ENCODE measurements at regions of chr5 and their contacts with region 1.

Region 1: GRCh38 chr5:157384971-157385709 is 74.9 kb upstream of the NIPAL4 start:
- DNase-seq: peak; percentile 40 to 91
- H3K4me3 ChIP-seq: peak overlapping the region in 1 of 2 donors; percentile 15
- H3K27ac ChIP-seq: peak overlapping the region; percentile 94
- H3K4me1 ChIP-seq: peaks cover 16 to 39% of the 10 kb centered on the region in 2 donors
- H3K27me3 ChIP-seq: no peaks in the 10 kb centered on the region
- CTCF ChIP-seq: no peak

Region 2: DNA sequence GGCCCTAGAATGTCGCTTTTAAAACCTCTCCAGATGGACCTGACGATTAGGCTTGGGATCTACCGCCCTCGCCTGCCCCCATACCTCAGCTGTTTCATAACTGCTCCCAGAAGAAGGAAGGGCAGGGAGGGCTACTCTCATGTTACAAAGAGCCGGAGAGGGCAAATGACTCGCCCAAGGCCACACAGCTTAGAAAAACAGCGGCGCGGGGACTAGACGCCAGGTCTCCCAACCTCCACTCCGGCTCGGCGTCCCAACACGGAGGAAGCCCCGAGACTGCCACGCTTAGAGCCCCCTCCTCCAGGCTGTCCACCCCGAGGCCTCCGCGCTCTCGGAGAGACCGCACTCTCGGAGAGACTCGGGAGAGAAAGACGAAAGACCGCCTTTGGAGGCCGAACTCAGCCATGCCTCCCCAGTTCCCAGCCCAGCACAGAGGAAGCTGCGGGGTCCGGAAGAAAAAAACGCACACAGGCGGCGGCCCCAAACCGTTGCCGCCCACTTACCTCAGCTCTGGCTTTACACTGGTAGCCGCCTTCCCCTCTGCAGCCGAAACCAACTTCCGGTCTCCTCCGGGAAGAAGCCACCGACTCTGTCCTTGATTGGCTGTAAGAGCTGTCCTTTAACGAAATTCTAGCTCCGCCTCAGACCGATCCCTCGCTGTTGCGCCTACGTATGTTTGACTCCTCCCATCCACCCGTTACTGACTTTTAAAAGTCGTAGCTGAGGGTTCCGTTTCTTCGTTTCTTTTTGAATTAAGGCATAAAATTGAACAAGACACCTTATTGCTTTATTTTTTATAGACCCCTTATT is 242.6 kb before region 1 on chr5 and contains the start of gene MED7:
- intact Hi-C with region 1: loop called (anchors 5 kb)
- DNase-seq: peak; percentile 88 to 98
- H3K4me3 ChIP-seq: peak within 1 kb of the TSS; percentile 74 to 77
- H3K27ac ChIP-seq: peak within 1 kb of the TSS; percentile 89 to 90
- H3K4me1 ChIP-seq: peaks cover 5 to 9% of the 10 kb centered on the region in 2 donors
- H3K27me3 ChIP-seq: no peaks in the 10 kb centered on the region
- CTCF ChIP-seq: no peak
- total RNA-seq, gene MED7: 2.3 TPM

Region 3: GRCh38 chr5:157366741-157367674 is 18.1 kb before region 1 on chr5:
- intact Hi-C with region 1: loop called (anchors 2 kb)
- DNase-seq: peak in 1 of 2 donors; percentile 72
- H3K4me3 ChIP-seq: no peak overlapping the region
- H3K27ac ChIP-seq: peak overlapping the region; percentile 28 to 54
- H3K4me1 ChIP-seq: peaks cover 0 to 3% of the 10 kb centered on the region in 2 donors
- H3K27me3 ChIP-seq: no peaks in the 10 kb centered on the region
- CTCF ChIP-seq: peak; percentile 53 to 78 (median 68)

Region 4: GRCh38 chr5:157415838-157416237 is 30.7 kb after region 1 on chr5:
- intact Hi-C with region 1: no loop called
- DNase-seq: no peak
- H3K4me3 ChIP-seq: no peak overlapping the region
- H3K27ac ChIP-seq: no peak overlapping the region
- H3K4me1 ChIP-seq: no peaks in the 10 kb centered on the region
- H3K27me3 ChIP-seq: no peaks in the 10 kb centered on the region
- CTCF ChIP-seq: no peak

Region 5: GRCh38 chr5:157464519-157465171 is 79.5 kb after region 1 on chr5:
- intact Hi-C with region 1: loop called (anchors 5 kb)
- DNase-seq: peak in 1 of 2 donors; percentile 87
- H3K4me3 ChIP-seq: no peak overlapping the region
- H3K27ac ChIP-seq: peak overlapping the region in 1 of 2 donors; percentile 5
- H3K4me1 ChIP-seq: peaks cover 0 to 7% of the 10 kb centered on the region in 2 donors
- H3K27me3 ChIP-seq: no peaks in the 10 kb centered on the region
- CTCF ChIP-seq: no peak

Region 6: DNA sequence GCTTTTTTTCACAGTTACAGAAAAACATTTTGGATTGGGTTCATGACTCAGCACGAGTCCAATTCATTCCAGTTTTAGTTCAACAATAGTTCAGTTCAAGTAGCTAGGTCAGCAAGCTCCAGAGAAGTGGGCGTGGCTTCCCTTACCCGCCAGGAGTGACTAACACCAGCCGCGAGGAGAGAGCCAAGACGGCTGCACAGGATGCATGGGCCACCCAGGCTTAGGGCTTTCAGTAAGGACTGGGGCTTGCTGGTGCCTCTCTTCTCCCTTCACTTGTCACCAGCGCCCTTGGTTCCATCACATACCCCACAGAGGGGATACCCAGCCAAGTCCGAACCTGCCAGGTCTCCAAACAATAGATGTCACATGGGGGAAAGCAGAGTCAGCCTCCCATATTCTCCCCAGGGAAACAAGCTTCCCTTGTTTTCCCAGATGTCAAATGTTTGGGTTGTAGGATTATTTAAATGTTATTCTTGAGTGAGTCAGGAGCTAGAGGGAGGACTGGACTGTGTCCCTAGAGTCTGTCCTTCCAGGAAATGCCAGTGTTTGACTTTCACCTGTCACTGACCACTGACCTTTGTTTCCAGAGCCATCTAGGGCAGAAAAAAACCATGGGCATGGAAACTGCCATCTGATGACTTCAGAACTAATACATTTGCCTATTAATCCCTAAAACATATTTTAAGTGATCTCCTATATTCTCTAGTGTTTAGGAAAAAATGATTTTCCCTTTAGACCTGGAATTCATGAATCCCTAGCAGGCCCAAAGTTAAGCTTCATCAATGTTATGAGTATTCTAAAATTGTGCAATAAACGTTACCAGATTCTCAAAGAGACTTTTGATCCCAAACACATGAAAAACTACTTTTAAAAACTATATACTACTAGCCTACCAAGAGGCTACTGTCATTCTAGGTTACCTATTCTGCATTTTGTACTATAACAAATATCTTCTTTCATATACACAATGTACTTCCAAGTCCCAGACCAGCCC is 126.8 kb after region 1 on chr5:
- intact Hi-C with region 1: loop called (anchors 2 kb)
- DNase-seq: peak; percentile 93 to 98
- H3K4me3 ChIP-seq: no peak overlapping the region
- H3K27ac ChIP-seq: peak overlapping the region; percentile 78 to 93
- H3K4me1 ChIP-seq: peaks cover 15 to 33% of the 10 kb centered on the region in 2 donors
- H3K27me3 ChIP-seq: no peaks in the 10 kb centered on the region
- CTCF ChIP-seq: no peak

Region 7: GRCh38 chr5:157563373-157563928 is 178.3 kb after region 1 on chr5:
- intact Hi-C with region 1: loop called (anchors 5 kb)
- DNase-seq: peak in 1 of 2 donors; percentile 84
- H3K4me3 ChIP-seq: peak overlapping the region in 1 of 2 donors; percentile 23
- H3K27ac ChIP-seq: peak overlapping the region; percentile 81 to 83
- H3K4me1 ChIP-seq: peaks cover 6 to 39% of the 10 kb centered on the region in 2 donors
- H3K27me3 ChIP-seq: no peaks in the 10 kb centered on the region
- CTCF ChIP-seq: no peak

Region 8: GRCh38 chr5:157731272-157732129 is 346.4 kb after region 1 on chr5 and contains the start of gene THG1L:
- intact Hi-C with region 1: loop called (anchors 2 kb)
- DNase-seq: peak; percentile 96 to 99
- H3K4me3 ChIP-seq: peak within 1 kb of the TSS; percentile 59 to 76
- H3K27ac ChIP-seq: peak within 1 kb of the TSS; percentile 87
- H3K4me1 ChIP-seq: no peaks in the 10 kb centered on the region
- H3K27me3 ChIP-seq: no peaks in the 10 kb centered on the region
- CTCF ChIP-seq: no peak
- total RNA-seq, gene THG1L: 0.32 TPM